ENCODE measurements at regions of chr15 and their contacts with region 1.

Region 1: DNA sequence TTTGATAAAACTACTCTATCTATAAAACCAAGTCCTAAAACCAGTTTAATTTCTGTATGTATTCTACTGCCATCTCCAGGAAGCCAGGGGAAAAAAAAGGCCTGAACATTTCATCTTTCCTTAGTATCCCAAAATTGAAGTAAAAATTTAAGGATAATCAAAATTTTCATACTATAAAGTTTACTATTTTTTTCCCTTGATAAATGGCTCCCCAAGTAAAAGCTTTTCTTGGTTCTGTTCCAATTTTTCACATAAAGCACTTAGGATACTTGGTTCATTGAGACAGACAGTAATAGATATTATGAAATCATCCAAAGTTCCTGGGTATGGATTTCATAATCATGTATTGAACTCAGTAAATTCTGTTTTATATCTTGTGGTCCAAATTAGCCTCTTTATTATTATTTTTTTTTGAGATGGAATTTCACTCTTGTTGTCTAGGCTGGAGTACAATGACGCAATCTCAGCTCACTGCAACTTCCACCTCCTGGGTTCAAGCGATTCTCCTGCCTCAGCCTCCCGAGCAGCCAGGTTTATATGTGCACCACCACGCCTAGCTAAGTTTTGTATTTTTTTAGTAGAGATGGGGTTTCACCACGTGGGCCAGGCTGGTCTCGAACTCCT is 34.5 kb downstream of the ICE2 start:
- DNase-seq: no peak
- H3K4me3 ChIP-seq: no peak overlapping the region
- H3K27ac ChIP-seq: no peak overlapping the region
- H3K4me1 ChIP-seq: no peaks in the 10 kb centered on the region
- H3K27me3 ChIP-seq: no peaks in the 10 kb centered on the region
- CTCF ChIP-seq: peak in 2 of 3 experiments; percentile 18 to 30
- POLR2A ChIP-seq: no peak

Region 2: DNA sequence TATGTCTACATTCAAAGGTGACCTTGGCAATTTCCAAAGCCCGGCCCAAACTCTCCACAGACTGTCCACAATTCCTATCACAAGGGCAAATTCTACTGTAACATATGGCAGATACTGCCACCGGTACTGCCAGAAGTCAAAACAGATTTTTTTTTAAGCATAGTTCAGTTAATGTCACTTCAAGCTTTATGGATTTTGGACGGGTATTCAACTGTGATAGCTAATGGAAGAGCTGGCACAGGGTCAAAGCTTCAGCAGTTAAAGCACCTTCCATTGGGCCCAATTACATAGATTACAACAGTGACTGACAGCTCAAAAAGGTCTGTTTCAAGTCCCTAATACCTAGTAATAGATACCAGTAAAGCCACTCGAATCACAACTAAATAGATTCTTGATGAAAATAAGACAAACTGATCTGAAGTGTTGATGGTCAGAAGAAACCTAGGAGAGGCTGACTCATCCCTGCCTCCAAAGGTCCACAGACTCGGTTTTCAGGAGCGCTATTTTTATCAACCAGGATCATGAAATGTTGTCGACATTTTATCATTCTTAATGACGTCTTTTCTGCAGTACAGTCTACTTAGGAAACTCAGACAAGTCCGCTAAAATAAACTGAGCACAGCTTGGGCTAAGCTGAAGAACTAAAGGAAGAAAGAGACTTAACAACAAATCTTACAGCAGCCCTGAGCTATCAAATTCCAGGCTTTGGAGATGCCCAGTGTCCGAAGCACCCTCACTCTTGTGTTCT is 85.3 kb before region 1 on chr15:
- intact Hi-C with region 1: loop called (anchors 10 kb)
- DNase-seq: no peak
- H3K4me3 ChIP-seq: no peak overlapping the region
- H3K27ac ChIP-seq: peak overlapping the region; percentile 50
- H3K4me1 ChIP-seq: peaks cover 44% of the 10 kb centered on the region
- H3K27me3 ChIP-seq: no peaks in the 10 kb centered on the region
- CTCF ChIP-seq: no peak
- POLR2A ChIP-seq: no peak

Measured in vagina (tissue), 2 donors.